Posterior vena cava (tissue), 2 donors: ENCODE measurements at regions of chr1 and their contacts with region 1.

Region 1: GRCh38 chr1:36369061-36369861 is 16.5 kb downstream of the STK40 start:
- DNase-seq: peak; percentile 89

Region 2: DNA sequence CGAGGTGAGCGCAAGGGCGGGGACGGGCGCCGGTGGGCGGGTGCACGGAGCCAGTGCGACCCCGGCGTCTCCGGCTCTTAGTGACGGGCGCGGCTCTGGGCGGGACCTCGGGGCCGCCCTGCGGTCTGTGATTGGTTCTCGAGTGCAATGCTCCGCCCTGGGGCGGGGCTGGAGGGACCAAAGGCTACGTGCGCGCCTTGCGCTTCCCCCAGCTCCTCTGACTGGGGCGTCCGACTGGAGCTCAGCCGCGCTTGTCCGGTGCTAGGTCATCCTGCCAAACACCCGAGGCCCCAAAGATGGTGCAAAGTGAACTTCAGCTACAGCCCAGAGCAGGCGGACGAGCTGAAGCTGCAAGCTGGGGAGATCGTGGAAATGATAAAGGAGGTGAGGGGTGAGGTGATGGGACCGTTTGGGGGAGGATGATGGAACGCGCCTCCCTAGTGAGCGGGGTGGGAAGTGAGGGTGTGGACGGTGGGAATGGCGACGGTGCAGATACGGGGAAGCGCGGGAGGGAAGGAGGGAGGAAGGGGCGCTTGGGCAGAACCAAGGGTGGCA is 62.3 kb before region 1 on chr1:
- intact Hi-C with region 1: loop called in 1 of 2 experiments (anchors 5 kb)
- DNase-seq: peak; percentile 97

Region 3: GRCh38 chr1:36450270-36450918 is 81.1 kb after region 1 on chr1 and contains the start of gene OSCP1:
- intact Hi-C with region 1: no loop called
- DNase-seq: peak; percentile 99
- total RNA-seq, gene OSCP1: 5.7 to 7.1 TPM

Region 4: GRCh38 chr1:36703526-36704208 is 334.4 kb after region 1 on chr1:
- intact Hi-C with region 1: no loop called
- DNase-seq: peak; percentile 92